ENCODE measurements at regions of chr1 and their contacts with region 1.

Region 1: GRCh38 chr1:3319874-3320245 is 134.6 kb upstream of the ARHGEF16 start:
- DNase-seq: peak; percentile 72 to 81
- H3K4me3 ChIP-seq: no peak overlapping the region
- H3K4me3 Mint-ChIP-seq: no peak overlapping the region
- H3K27ac Mint-ChIP-seq: no peak overlapping the region
- H3K4me1 ChIP-seq: peaks cover 57% of the 10 kb centered on the region
- H3K4me1 Mint-ChIP-seq: peaks cover 15% of the 10 kb centered on the region
- H3K27me3 ChIP-seq: no peaks in the 10 kb centered on the region
- H3K27me3 Mint-ChIP-seq: no peaks in the 10 kb centered on the region
- CTCF ChIP-seq: peak; percentile 68 to 71

Region 2: GRCh38 chr1:3012456-3013291 is 307.2 kb before region 1 on chr1:
- CTCF ChIA-PET with region 1: interaction called, 3 read pairs
- POLR2A ChIA-PET with region 1: no interaction called
- intact Hi-C with region 1: loop called (anchors 5 kb)
- DNase-seq: peak in 1 of 2 experiments; percentile 68
- H3K4me3 ChIP-seq: no peak overlapping the region
- H3K4me3 Mint-ChIP-seq: no peak overlapping the region
- H3K27ac Mint-ChIP-seq: no peak overlapping the region
- H3K4me1 ChIP-seq: no peaks in the 10 kb centered on the region
- H3K4me1 Mint-ChIP-seq: no peaks in the 10 kb centered on the region
- H3K27me3 ChIP-seq: no peaks in the 10 kb centered on the region
- H3K27me3 Mint-ChIP-seq: peaks cover 4% of the 10 kb centered on the region
- CTCF ChIP-seq: peak; percentile 60 to 77

Region 3: GRCh38 chr1:3069491-3070303 is 250.2 kb before region 1 on chr1:
- CTCF ChIA-PET with region 1: interaction called, 3 read pairs
- POLR2A ChIA-PET with region 1: no interaction called
- intact Hi-C with region 1: loop called (anchors 2 kb)
- DNase-seq: peak in 1 of 2 experiments; percentile 68
- H3K4me3 ChIP-seq: peak overlapping the region; percentile 48
- H3K4me3 Mint-ChIP-seq: peak overlapping the region; percentile 86
- H3K27ac Mint-ChIP-seq: no peak overlapping the region
- H3K4me1 ChIP-seq: no peaks in the 10 kb centered on the region
- H3K4me1 Mint-ChIP-seq: no peaks in the 10 kb centered on the region
- H3K27me3 ChIP-seq: no peaks in the 10 kb centered on the region
- H3K27me3 Mint-ChIP-seq: no peaks in the 10 kb centered on the region
- CTCF ChIP-seq: peak; percentile 28 to 40

Region 4: DNA sequence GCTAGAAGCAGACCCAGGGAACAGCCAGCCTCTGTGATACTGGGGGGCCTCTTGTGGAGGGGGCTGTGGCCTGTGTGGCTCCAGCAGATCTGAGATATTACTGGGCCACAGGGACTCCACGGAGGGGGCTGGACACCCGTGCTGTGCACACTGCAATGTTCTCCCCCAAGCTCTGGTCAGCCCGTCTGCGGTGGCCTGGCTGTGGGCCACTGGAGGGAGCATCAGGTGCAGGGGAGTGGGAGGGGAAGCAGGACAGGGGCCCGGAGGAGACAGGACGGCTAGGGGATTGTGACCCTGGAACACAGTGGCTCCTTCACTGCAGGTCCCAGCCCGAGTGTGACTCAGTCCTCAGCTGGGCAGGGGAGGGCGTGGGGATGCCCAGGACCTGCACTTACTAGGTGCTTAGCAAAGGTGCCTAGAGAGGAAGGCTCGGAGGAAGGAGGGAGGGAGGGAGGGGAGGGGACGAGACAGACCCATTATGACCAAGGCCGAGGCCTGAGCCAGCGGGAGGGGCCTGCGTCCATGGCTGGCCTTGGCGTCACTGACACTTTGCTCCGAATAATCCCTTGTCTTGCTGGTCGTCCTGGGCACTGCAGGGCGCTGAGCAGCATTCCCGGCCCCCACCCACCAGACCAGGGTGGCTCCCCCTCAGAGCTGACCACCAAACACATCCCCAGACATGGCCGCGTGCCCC is 206.7 kb before region 1 on chr1:
- CTCF ChIA-PET with region 1: no interaction called
- POLR2A ChIA-PET with region 1: no interaction called
- intact Hi-C with region 1: no loop called
- DNase-seq: no peak
- H3K4me3 ChIP-seq: no peak overlapping the region
- H3K4me3 Mint-ChIP-seq: no peak overlapping the region
- H3K27ac Mint-ChIP-seq: no peak overlapping the region
- H3K4me1 ChIP-seq: no peaks in the 10 kb centered on the region
- H3K4me1 Mint-ChIP-seq: no peaks in the 10 kb centered on the region
- H3K27me3 ChIP-seq: no peaks in the 10 kb centered on the region
- H3K27me3 Mint-ChIP-seq: no peaks in the 10 kb centered on the region
- CTCF ChIP-seq: no peak

Region 5: GRCh38 chr1:3247521-3248121 is 72.2 kb before region 1 on chr1:
- CTCF ChIA-PET with region 1: interaction called, 7 read pairs
- POLR2A ChIA-PET with region 1: no interaction called
- intact Hi-C with region 1: loop called (anchors 2 kb)
- DNase-seq: no peak
- H3K4me3 ChIP-seq: no peak overlapping the region
- H3K4me3 Mint-ChIP-seq: no peak overlapping the region
- H3K27ac Mint-ChIP-seq: no peak overlapping the region
- H3K4me1 ChIP-seq: peaks cover 29% of the 10 kb centered on the region
- H3K4me1 Mint-ChIP-seq: peaks cover 6% of the 10 kb centered on the region
- H3K27me3 ChIP-seq: no peaks in the 10 kb centered on the region
- H3K27me3 Mint-ChIP-seq: no peaks in the 10 kb centered on the region
- CTCF ChIP-seq: no peak

Region 6: GRCh38 chr1:3258386-3259003 is 61.4 kb before region 1 on chr1:
- CTCF ChIA-PET with region 1: no interaction called
- POLR2A ChIA-PET with region 1: no interaction called
- intact Hi-C with region 1: no loop called
- DNase-seq: no peak
- H3K4me3 ChIP-seq: no peak overlapping the region
- H3K4me3 Mint-ChIP-seq: no peak overlapping the region
- H3K27ac Mint-ChIP-seq: no peak overlapping the region
- H3K4me1 ChIP-seq: no peaks in the 10 kb centered on the region
- H3K4me1 Mint-ChIP-seq: no peaks in the 10 kb centered on the region
- H3K27me3 ChIP-seq: no peaks in the 10 kb centered on the region
- H3K27me3 Mint-ChIP-seq: no peaks in the 10 kb centered on the region
- CTCF ChIP-seq: no peak

Region 7: DNA sequence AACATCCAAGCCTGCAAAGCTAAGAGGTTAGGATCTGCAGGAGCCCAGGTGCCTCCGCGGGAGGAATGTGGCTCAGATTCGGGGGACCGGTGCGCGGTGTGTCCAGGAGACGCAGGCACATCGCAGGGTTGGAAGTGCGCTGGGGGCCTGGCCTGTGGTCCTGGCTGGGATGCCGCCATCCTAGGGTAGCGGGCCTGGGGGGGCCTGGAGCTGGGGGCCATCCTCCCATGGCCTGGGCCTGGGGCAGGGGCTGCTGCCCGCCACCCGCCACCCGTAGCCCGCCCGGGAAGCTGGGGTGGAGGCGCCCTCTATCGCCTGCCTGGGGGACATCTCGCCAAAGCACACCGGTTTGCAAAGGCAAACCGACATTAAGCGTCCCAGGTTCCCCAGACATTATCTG is 36.0 kb before region 1 on chr1:
- CTCF ChIA-PET with region 1: interaction called, 3 read pairs
- POLR2A ChIA-PET with region 1: no interaction called
- intact Hi-C with region 1: loop called (anchors 1 kb)
- DNase-seq: peak in 1 of 2 experiments; percentile 17
- H3K4me3 ChIP-seq: no peak overlapping the region
- H3K4me3 Mint-ChIP-seq: no peak overlapping the region
- H3K27ac Mint-ChIP-seq: no peak overlapping the region
- H3K4me1 ChIP-seq: no peaks in the 10 kb centered on the region; the same call in 1 of the 2 replicates
- H3K4me1 Mint-ChIP-seq: no peaks in the 10 kb centered on the region
- H3K27me3 ChIP-seq: no peaks in the 10 kb centered on the region
- H3K27me3 Mint-ChIP-seq: no peaks in the 10 kb centered on the region
- CTCF ChIP-seq: peak; percentile 29 to 34

Region 8: DNA sequence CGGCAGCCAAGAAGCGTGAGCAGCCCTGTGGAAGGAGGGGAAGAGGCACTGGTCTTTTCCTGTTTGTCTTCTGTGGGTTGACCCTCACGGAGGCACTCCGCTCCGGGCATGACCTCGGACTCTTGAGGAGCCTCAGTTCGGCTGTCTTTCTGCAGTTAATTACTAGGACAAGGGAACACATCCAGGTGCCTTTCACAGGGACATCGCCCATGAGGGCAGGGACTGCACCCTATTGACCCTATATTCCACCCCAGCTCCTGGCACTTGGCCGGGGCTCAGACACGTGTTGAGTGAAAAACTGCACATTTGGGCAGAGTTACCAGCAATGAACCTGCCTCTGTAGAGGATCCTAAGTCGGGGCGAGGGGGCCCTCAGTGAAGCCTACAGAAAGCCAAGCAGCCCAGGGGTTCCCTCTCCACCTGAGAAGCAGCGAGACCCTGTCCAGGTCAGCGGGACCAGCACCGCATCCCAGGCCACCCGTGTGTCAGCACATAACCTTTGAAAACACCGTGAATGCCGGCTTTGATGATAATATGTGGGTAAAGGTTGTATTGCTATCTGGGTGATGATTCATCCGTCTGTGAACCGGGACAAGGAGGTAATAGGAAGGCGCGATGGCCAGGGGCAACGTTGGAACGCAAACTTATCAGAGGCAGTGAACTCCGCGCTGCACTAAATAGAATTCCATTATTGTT is 26.8 kb before region 1 on chr1:
- CTCF ChIA-PET with region 1: interaction called, 6 read pairs
- POLR2A ChIA-PET with region 1: no interaction called
- intact Hi-C with region 1: loop called (anchors 1 kb)
- DNase-seq: peak; percentile 74 to 86
- H3K4me3 ChIP-seq: no peak overlapping the region
- H3K4me3 Mint-ChIP-seq: peak overlapping the region; percentile 59
- H3K27ac Mint-ChIP-seq: peak overlapping the region; percentile 33
- H3K4me1 ChIP-seq: peaks cover 44% of the 10 kb centered on the region
- H3K4me1 Mint-ChIP-seq: peaks cover 22% of the 10 kb centered on the region
- H3K27me3 ChIP-seq: no peaks in the 10 kb centered on the region
- H3K27me3 Mint-ChIP-seq: no peaks in the 10 kb centered on the region
- CTCF ChIP-seq: no peak

Region 9: DNA sequence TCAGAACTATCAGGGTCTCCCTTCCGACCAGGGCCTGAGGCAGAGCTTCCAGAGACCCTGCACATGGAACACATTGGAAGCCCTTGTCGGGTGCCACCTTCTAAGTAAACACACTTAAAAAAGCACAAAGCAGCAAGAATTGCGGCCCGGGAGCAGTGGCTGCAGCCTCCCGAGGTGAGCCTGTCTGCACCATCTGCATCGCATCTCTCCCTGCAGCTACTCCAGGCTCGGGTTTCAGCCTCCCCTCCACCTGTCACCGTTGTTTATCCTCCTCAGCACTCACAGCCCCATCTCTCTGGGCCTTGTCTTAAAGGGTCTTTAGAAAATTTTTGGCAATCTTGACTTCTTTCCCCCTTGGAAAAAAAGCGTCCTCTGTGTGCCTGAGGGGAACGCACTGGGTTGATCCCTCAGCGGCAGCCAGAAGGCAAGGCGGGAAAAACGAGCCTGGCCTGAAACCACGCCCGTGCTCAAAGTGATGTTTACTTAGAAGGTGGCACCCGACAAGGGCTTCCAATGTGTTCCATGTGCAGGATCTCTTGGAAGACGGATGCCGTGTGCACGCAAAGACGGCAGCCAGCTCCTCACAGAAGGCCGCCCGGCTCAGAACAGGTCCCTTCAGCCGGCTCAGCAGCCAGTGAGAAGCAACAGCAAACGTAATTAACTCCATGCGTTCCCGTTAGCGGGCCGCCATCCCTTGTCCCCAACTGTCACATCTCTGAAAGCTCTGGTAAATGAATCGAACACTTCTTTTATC is 39.7 kb after region 1 on chr1:
- CTCF ChIA-PET with region 1: no interaction called
- POLR2A ChIA-PET with region 1: no interaction called
- intact Hi-C with region 1: loop called (anchors 5 kb)
- DNase-seq: no peak
- H3K4me3 ChIP-seq: no peak overlapping the region
- H3K4me3 Mint-ChIP-seq: no peak overlapping the region
- H3K27ac Mint-ChIP-seq: no peak overlapping the region
- H3K4me1 ChIP-seq: peaks cover 26% of the 10 kb centered on the region
- H3K4me1 Mint-ChIP-seq: no peaks in the 10 kb centered on the region
- H3K27me3 ChIP-seq: no peaks in the 10 kb centered on the region
- H3K27me3 Mint-ChIP-seq: no peaks in the 10 kb centered on the region
- CTCF ChIP-seq: no peak